Activated T-helper 1 cell treated with anti-CD3 and anti-CD28 coated beads, Interleukin-12 subunit alpha, Interleukin-12 subunit beta, Interleukin-2, Interleukin-4 antibody, amounts not matched to agents 30 ng/mL and 10 ng/mL and 1 ng/mL, durations not matched to agents 14 hours and 24 hours and 36 hours (primary cell): ENCODE measurements at regions of chr4 and their contacts with region 1.

Region 1: GRCh38 chr4:119314356-119314755 is 7.6 kb downstream of the FABP2 start:
- DNase-seq: peak; percentile 10
- H3K4me3 Mint-ChIP-seq: no peak overlapping the region
- H3K27ac Mint-ChIP-seq: no peak overlapping the region
- H3K4me1 Mint-ChIP-seq: no peaks in the 10 kb centered on the region
- H3K27me3 Mint-ChIP-seq: peaks cover 12% of the 10 kb centered on the region

Region 2: DNA sequence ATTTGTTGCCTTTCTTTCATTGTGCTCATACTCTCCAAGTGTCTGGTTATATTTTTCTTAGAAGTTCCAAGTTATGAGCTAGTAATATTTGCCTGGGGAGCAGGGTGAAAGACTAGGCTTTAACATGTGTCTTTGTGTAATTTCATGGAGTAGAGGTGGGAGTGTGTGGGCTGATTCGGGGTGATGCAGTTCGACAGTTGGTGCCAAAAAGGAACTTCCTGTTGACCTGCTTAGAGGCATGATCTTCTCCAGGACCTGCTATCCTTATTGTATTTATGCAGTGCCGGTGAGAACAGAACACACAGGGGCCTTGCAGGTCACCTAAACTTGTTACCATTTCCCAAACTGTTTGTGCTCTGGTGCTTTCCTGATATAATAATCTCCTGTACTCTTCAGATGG is 80.6 kb before region 1 on chr4:
- intact Hi-C with region 1: no loop called
- DNase-seq: no peak
- H3K4me3 Mint-ChIP-seq: peak overlapping the region; percentile 5
- H3K27ac Mint-ChIP-seq: peak overlapping the region; percentile 78
- H3K4me1 Mint-ChIP-seq: peaks cover 32% of the 10 kb centered on the region
- H3K27me3 Mint-ChIP-seq: no peaks in the 10 kb centered on the region

Region 3: DNA sequence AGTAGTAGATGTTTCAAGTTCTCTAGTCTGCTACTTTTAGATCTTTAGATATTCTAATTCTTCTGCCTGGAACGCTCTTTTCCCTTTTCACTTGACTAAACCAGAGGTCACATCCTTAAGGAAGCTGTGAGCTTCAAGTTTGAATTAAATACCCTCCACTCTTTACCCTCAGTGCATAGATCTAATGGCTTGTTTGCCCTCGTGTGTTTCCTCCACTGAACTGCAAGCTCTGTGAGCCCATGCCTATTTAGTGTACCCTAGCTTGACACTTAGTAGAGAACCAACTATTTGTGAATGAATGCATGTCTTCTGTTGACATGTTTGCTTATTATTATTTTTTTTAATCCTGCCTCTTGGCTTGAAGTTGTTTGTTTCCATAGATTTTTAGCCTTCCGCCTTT is 176.0 kb after region 1 on chr4:
- intact Hi-C with region 1: loop called (anchors 1 kb)
- DNase-seq: no peak
- H3K4me3 Mint-ChIP-seq: no peak overlapping the region
- H3K27ac Mint-ChIP-seq: no peak overlapping the region
- H3K4me1 Mint-ChIP-seq: no peaks in the 10 kb centered on the region
- H3K27me3 Mint-ChIP-seq: no peaks in the 10 kb centered on the region

Region 4: GRCh38 chr4:119785963-119786362 is 471.6 kb after region 1 on chr4:
- intact Hi-C with region 1: loop called (anchors 10 kb)
- DNase-seq: no peak
- H3K4me3 Mint-ChIP-seq: no peak overlapping the region
- H3K27ac Mint-ChIP-seq: no peak overlapping the region
- H3K4me1 Mint-ChIP-seq: no peaks in the 10 kb centered on the region
- H3K27me3 Mint-ChIP-seq: no peaks in the 10 kb centered on the region